ENCODE measurements at regions of chr12 and their contacts with region 1.

Region 1: DNA sequence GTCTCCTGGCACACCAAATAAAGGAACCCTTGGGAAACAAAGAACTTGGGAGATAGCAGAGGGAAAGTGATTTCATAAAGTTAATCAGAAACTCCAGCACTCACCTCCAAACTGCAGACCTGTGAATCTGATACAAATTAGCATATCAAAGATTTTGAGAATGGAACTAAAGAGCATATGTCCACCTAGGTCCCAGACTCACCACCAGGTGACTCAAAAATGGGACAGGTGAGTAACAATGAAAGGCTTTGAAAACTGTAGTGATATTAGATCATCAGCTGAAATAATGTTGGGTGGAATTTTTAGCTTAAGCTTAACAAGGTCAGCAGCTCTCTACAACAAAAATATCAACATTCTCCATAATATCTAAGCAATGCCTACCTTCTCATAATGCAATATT is 214.8 kb downstream of the RERGL start:
- DNase-seq: no peak
- H3K4me3 ChIP-seq: no peak overlapping the region
- H3K27ac ChIP-seq: no peak overlapping the region
- H3K4me1 ChIP-seq: no peaks in the 10 kb centered on the region
- H3K27me3 ChIP-seq: no peaks in the 10 kb centered on the region
- CTCF ChIP-seq: no peak
- POLR2A ChIP-seq: no peak

Region 2: DNA sequence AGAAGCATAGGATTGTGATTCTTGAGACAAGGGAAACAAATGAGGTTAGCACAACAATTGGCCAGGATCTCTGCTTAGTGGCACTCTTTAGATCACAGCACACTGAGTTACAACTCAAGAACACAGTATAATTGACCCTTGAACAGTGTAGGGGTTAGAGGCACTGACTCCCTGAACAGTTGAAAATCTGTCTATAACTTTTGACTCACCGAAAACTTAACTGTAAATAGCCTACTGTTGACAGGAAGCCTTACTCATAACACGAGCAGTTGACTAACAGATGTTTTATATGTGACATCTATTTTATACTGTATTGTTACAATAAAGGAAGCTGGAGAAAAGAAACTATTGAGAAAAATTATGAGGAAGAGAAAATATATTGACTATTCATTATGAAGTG is 81.4 kb before region 1 on chr12:
- CTCF ChIA-PET with region 1: no interaction called
- POLR2A ChIA-PET with region 1: no interaction called
- dilution Hi-C with region 1: no loop called
- intact Hi-C with region 1: loop called (anchors 5 kb)
- DNase-seq: no peak
- H3K4me3 ChIP-seq: no peak overlapping the region
- H3K27ac ChIP-seq: no peak overlapping the region
- H3K4me1 ChIP-seq: no peaks in the 10 kb centered on the region
- H3K27me3 ChIP-seq: no peaks in the 10 kb centered on the region
- CTCF ChIP-seq: no peak
- POLR2A ChIP-seq: no peak

Region 3: DNA sequence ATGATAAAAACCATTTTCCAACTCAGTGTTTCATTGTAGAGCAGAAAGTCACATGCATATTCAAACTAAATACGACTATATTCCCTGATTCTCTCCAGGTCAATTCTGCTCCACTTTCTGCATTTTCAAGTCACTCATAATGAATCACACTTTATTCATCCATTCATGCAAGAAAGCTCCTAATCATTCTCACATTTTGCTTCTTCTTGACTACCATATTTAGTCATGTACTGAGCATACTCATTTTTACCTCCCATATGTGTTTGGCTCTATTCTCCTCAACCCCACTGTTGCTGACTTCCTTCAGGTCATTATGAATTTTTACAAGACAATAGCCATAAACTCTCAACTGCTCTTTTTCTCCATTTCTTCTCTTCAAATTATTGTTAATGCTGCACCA is 342.7 kb after region 1 on chr12:
- CTCF ChIA-PET with region 1: no interaction called
- POLR2A ChIA-PET with region 1: no interaction called
- dilution Hi-C with region 1: no loop called
- intact Hi-C with region 1: no loop called
- DNase-seq: no peak
- H3K4me3 ChIP-seq: no peak overlapping the region
- H3K27ac ChIP-seq: no peak overlapping the region
- H3K4me1 ChIP-seq: no peaks in the 10 kb centered on the region
- H3K27me3 ChIP-seq: no peaks in the 10 kb centered on the region
- CTCF ChIP-seq: no peak
- POLR2A ChIP-seq: no peak